Pancreas (tissue), 10 donors: ENCODE measurements at regions of chr11 and their contacts with region 1.

Region 1: DNA sequence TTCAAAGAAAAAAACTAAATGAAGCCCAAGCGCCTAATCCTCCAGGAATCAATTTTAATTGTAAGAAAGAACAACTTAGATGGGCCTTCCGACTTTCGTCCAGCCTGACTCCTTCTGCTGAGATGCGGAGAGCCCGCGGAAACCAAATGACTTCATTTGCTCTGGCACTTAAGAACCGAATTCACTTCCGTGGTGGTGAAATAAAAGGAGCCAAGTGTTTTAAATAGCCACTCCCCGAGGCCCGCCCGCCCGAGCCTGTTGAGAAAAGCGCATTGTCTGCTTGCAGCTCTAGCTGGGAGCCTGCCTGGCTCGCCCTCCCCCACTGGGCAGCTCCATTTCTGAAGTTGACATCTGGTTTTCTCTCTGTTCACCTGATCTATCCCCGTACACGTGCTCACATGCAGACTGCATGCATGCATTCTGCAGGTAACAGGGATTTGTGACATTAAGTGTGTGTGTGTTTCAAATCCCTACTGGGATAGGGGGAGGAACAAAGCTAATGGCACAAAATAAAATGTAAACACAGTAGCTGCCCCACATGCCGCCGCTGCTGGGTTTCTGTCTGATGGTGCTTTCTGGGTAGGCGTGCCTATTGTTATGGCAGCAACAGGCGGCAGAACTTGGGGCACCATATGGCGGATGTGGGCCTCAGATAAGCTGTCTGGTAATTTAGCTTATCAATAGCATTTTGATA is 6.2 kb downstream of the TEAD1 start:
- DNase-seq: peak; percentile 86 to 94 (median 88)
- ATAC-seq: peak; percentile 94 to 97 (median 96)
- H3K4me3 ChIP-seq: peak overlapping the region in 2 of 4 donors; percentile 9 to 11
- H3K27ac ChIP-seq: peak overlapping the region in 3 of 4 donors; percentile 33 to 78 (median 67)
- H3K4me1 ChIP-seq: peaks cover 4 to 40% (median 21%) of the 10 kb centered on the region in 3 donors
- H3K27me3 ChIP-seq: no peaks in the 10 kb centered on the region
- CTCF ChIP-seq: no peak

Region 2: GRCh38 chr11:12792590-12792989 is 112.2 kb after region 1 on chr11:
- intact Hi-C with region 1: loop called in 1 of 3 experiments (anchors 10 kb)
- DNase-seq: peak in 1 of 6 donors; percentile 42
- ATAC-seq: peak; percentile 38 to 65 (median 54)
- H3K4me3 ChIP-seq: no peak overlapping the region
- H3K27ac ChIP-seq: no peak overlapping the region
- H3K4me1 ChIP-seq: peaks cover 5 to 12% (median 6%) of the 10 kb centered on the region in 3 donors
- H3K27me3 ChIP-seq: no peaks in the 10 kb centered on the region
- CTCF ChIP-seq: no peak

Region 3: GRCh38 chr11:12950681-12951080 is 270.3 kb after region 1 on chr11:
- intact Hi-C with region 1: no loop called
- DNase-seq: no peak
- ATAC-seq: no peak
- H3K4me3 ChIP-seq: no peak overlapping the region
- H3K27ac ChIP-seq: no peak overlapping the region
- H3K4me1 ChIP-seq: peaks cover 0 to 4% (median 0%) of the 10 kb centered on the region in 3 donors
- H3K27me3 ChIP-seq: no peaks in the 10 kb centered on the region
- CTCF ChIP-seq: no peak